Activated CD8-positive, alpha-beta T cell treated with anti-CD3 and anti-CD28 coated beads for 36 hours (primary cell): ENCODE measurements at regions of chr5 and their contacts with region 1.

Region 1: DNA sequence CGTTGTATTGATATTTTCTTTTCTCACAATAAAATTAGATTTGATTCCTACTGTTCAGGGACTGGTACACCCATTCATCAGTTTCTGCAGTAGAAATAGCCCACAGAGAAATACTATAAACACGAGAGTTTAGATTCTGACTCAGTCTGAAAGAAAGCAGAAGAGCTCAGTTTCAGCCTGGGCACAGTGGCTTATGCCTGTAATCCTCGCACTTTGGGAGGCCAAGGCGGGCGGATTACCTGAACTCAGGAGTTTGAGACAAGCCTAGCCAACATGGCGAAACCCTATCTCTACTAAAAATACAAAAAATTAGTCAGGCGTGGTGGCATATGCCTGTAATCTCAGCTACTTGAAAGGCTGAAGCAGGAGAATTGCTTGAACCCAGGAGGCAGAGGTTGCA is 8.6 kb downstream of the ITK start:
- DNase-seq: peak; percentile 68
- ATAC-seq: peak; percentile 50
- H3K4me3 Mint-ChIP-seq: peak overlapping the region; percentile 99
- H3K27ac Mint-ChIP-seq: peak overlapping the region; percentile 94
- H3K4me1 Mint-ChIP-seq: peaks cover 56% of the 10 kb centered on the region
- H3K27me3 Mint-ChIP-seq: no peaks in the 10 kb centered on the region
- CTCF ChIP-seq: no peak

Region 2: GRCh38 chr5:157172403-157172802 is 16.8 kb before region 1 on chr5:
- CTCF ChIA-PET with region 1: interaction called, 39 read pairs
- POLR2A ChIA-PET with region 1: interaction called, 1,980 read pairs
- intact Hi-C with region 1: no loop called
- DNase-seq: peak; percentile 98
- ATAC-seq: peak; percentile 92
- H3K4me3 Mint-ChIP-seq: peak overlapping the region; percentile 62
- H3K27ac Mint-ChIP-seq: peak overlapping the region; percentile 93
- H3K4me1 Mint-ChIP-seq: peaks cover 82% of the 10 kb centered on the region
- H3K27me3 Mint-ChIP-seq: no peaks in the 10 kb centered on the region
- CTCF ChIP-seq: no peak

Region 3: DNA sequence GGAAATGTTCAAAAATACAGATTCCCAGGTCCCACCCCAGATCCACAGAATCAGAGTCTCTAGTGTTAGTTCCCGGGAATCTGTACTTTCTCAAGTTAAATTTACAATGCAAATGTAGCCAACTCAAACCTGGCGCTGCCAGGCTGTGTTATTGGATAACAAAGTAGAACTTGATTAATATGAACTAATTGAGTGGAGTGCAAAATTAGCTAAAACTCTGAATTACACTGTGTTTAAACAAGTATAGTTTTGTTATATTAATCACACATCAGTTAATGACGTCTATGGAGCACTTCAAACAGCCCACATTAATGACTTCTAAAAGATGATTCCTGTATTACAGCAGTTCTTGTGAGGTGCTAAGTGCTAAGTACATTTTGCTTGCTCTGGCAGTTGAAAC is 44.3 kb after region 1 on chr5:
- CTCF ChIA-PET with region 1: no interaction called
- POLR2A ChIA-PET with region 1: interaction called, 1,980 read pairs
- intact Hi-C with region 1: no loop called
- DNase-seq: no peak
- ATAC-seq: peak; percentile 58
- H3K4me3 Mint-ChIP-seq: no peak overlapping the region
- H3K27ac Mint-ChIP-seq: peak overlapping the region; percentile 89
- H3K4me1 Mint-ChIP-seq: peaks cover 75% of the 10 kb centered on the region
- H3K27me3 Mint-ChIP-seq: no peaks in the 10 kb centered on the region
- CTCF ChIP-seq: no peak